ENCODE measurements at regions of chr11 and their contacts with region 1.

Region 1: DNA sequence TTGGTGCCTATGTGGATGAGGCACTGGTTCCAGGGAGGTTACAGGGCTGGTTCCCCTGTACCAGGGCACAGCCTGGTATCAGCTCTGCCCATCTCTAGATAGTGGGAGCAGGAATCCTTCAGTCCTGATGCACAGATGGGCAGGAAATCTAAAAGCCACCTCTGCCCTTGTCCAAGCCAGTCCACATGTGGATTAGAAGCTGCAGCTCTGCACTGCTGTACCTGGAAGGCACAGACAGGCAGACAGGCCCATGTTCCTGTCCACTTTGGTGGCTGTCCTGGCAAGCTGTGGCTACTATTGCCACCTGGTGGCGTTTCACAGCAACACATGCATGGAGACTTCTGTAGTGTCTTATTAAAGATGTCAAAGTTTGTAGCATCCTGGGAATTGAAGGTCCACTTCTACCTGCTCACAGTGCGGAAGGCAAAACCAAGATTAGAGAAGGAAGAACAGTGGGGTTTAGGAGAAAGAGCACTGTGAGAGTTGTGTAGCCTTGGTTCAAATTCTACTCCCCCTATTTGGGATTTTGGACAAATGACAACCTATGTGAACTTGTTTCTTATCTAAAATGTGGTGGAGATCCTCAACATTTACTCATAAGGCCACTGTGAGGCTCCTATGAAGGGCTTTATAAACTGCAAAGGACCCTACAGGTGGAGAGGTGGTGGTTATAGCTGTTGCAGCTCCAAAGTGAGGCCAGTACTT is 30.1 kb downstream of the NAV2 start:
- DNase-seq: peak; percentile 78
- H3K4me3 Mint-ChIP-seq: no peak overlapping the region
- H3K27ac Mint-ChIP-seq: no peak overlapping the region
- H3K4me1 Mint-ChIP-seq: peaks cover 15% of the 10 kb centered on the region
- H3K27me3 Mint-ChIP-seq: no peaks in the 10 kb centered on the region
- CTCF ChIP-seq: peak; percentile 89

Region 2: DNA sequence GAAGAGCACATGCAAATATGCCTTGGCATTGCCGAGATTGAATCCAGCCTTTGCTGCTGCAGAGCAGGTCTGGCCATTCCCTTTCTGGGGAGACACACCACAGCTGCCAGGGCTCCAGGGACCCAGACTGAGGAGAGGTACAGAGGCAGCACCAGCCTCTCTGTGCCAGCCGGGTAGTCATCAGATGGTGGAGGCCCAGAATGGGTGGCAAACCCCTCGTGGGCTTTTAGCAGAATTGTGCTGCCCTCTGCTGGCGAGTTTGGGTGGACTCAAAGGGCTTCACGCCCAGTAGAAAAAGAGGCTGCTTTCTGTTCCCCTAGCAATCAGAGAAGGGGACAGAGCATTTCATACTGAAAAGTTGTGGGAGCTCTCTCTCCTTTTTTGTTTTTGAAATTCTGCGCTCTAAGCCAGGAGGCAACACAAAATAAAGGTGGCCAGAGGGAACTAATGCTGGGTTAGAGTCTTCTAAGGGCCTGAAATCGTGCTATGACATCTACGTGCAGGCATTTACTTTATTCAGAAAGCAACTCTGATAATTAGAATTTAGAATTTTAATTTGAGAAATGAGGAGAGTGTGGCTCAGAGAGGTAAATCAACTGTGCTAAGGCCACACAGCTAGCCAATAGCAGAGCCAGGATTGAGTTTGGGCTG is 188.9 kb before region 1 on chr11:
- CTCF ChIA-PET with region 1: interaction called, 408 read pairs
- POLR2A ChIA-PET with region 1: interaction called, 3 read pairs
- intact Hi-C with region 1: no loop called
- DNase-seq: peak; percentile 85
- H3K4me3 Mint-ChIP-seq: no peak overlapping the region
- H3K27ac Mint-ChIP-seq: no peak overlapping the region
- H3K4me1 Mint-ChIP-seq: no peaks in the 10 kb centered on the region
- H3K27me3 Mint-ChIP-seq: peaks cover 52% of the 10 kb centered on the region
- CTCF ChIP-seq: peak; percentile 88

Region 3: GRCh38 chr11:19566583-19567379 is 176.0 kb before region 1 on chr11:
- CTCF ChIA-PET with region 1: interaction called, 408 read pairs
- POLR2A ChIA-PET with region 1: interaction called, 7 read pairs
- intact Hi-C with region 1: loop called (anchors 1 kb)
- DNase-seq: no peak
- H3K4me3 Mint-ChIP-seq: no peak overlapping the region
- H3K27ac Mint-ChIP-seq: no peak overlapping the region
- H3K4me1 Mint-ChIP-seq: no peaks in the 10 kb centered on the region
- H3K27me3 Mint-ChIP-seq: no peaks in the 10 kb centered on the region
- CTCF ChIP-seq: no peak

Region 4: DNA sequence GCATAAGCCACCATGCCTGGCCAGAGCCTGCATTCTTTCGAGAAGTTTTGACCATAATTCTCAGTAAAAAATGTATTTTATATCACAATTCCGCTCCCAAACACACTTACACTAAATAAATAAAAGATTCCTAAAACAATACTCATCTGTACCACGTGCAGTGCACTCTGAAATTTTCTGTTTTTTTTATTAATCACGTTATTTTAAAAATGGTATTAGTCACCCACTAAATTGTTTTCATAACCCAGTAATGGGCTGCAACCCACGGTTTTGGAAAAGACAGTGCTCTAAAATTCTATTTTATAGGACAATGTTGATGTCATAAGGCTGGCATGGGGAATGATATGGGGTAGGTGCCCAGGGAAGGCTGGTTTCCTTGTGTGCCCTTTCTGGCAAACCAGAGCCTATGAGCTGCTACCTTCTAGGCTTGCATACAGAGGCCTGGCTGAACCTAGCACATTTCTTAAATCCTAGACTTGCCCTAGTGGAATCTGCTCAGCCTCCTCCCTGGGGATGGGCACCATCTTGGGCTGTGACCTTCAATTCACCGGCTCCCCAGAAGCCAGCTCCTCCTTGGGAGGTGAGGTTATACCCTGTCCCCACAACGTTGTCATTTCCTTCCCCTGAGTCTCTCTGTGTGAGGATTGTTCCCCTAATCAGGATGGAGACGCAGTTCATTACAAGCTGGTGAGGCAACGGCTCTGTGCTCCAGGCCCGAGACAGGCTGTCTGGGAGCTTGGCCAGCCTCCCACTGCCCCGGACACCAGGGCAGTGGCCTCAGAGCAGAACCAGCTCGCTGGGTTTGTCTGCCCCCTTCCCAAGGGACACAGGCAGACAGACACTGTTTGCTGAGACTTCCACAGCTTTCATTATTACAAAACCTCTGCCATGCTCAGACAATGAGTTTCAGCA is 146.6 kb before region 1 on chr11:
- CTCF ChIA-PET with region 1: interaction called, 7 read pairs
- POLR2A ChIA-PET with region 1: no interaction called
- intact Hi-C with region 1: loop called (anchors 1 kb)
- DNase-seq: peak; percentile 94
- H3K4me3 Mint-ChIP-seq: peak overlapping the region; percentile 23
- H3K27ac Mint-ChIP-seq: peak overlapping the region; percentile 92
- H3K4me1 Mint-ChIP-seq: peaks cover 39% of the 10 kb centered on the region
- H3K27me3 Mint-ChIP-seq: no peaks in the 10 kb centered on the region
- CTCF ChIP-seq: no peak

Region 5: GRCh38 chr11:19679952-19680828 is 62.5 kb before region 1 on chr11:
- CTCF ChIA-PET with region 1: interaction called, 5 read pairs
- POLR2A ChIA-PET with region 1: no interaction called
- intact Hi-C with region 1: loop called (anchors 2 kb)
- DNase-seq: peak; percentile 97
- H3K4me3 Mint-ChIP-seq: peak overlapping the region; percentile 38
- H3K27ac Mint-ChIP-seq: peak overlapping the region; percentile 80
- H3K4me1 Mint-ChIP-seq: peaks cover 41% of the 10 kb centered on the region
- H3K27me3 Mint-ChIP-seq: no peaks in the 10 kb centered on the region
- CTCF ChIP-seq: no peak

Region 6: GRCh38 chr11:19723572-19724342 is 19.0 kb before region 1 on chr11:
- CTCF ChIA-PET with region 1: interaction called, 10 read pairs
- POLR2A ChIA-PET with region 1: interaction called, 3 read pairs
- intact Hi-C with region 1: no loop called
- DNase-seq: peak; percentile 67
- H3K4me3 Mint-ChIP-seq: no peak overlapping the region
- H3K27ac Mint-ChIP-seq: peak overlapping the region; percentile 63
- H3K4me1 Mint-ChIP-seq: peaks cover 41% of the 10 kb centered on the region
- H3K27me3 Mint-ChIP-seq: no peaks in the 10 kb centered on the region
- CTCF ChIP-seq: no peak

Region 7: DNA sequence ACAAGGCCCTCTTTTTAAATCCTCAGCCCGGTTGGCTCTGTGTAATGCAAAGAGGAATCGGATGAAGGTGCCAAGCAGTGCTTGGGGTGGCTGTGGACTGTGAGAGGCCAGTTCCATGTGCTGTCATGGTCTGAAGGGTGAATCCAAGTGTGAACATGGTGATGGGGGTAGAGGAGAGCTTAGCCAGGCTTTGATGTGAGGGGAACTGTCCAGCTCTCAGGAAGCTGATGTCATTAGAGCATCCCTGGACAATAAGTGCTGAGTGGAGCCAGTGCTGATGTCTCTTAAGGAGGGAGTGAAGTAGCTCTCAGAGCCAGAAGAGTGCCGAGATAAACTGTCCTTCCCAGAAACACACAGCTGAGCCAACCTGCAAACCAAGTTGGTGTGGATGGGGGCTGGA is 23.5 kb after region 1 on chr11:
- CTCF ChIA-PET with region 1: interaction called, 13 read pairs
- POLR2A ChIA-PET with region 1: no interaction called
- intact Hi-C with region 1: no loop called
- DNase-seq: no peak
- H3K4me3 Mint-ChIP-seq: no peak overlapping the region
- H3K27ac Mint-ChIP-seq: no peak overlapping the region
- H3K4me1 Mint-ChIP-seq: peaks cover 9% of the 10 kb centered on the region
- H3K27me3 Mint-ChIP-seq: no peaks in the 10 kb centered on the region
- CTCF ChIP-seq: no peak

Measured in MCF 10A (cell line).